Caco-2 (cell line): ENCODE measurements at regions of chr6 and their contacts with region 1.

Region 1: GRCh38 chr6:84346364-84346763 is 118.9 kb upstream of the CEP162 start:
- DNase-seq: no peak
- H3K4me3 ChIP-seq: no peak overlapping the region
- H3K4me3 Mint-ChIP-seq: no peak overlapping the region
- H3K27ac Mint-ChIP-seq: no peak overlapping the region
- H3K4me1 ChIP-seq: no peaks in the 10 kb centered on the region
- H3K4me1 Mint-ChIP-seq: peaks cover 6% of the 10 kb centered on the region
- H3K27me3 ChIP-seq: no peaks in the 10 kb centered on the region
- H3K27me3 Mint-ChIP-seq: peaks cover 7% of the 10 kb centered on the region
- CTCF ChIP-seq: peak in 1 of 2 experiments; percentile 13

Region 2: DNA sequence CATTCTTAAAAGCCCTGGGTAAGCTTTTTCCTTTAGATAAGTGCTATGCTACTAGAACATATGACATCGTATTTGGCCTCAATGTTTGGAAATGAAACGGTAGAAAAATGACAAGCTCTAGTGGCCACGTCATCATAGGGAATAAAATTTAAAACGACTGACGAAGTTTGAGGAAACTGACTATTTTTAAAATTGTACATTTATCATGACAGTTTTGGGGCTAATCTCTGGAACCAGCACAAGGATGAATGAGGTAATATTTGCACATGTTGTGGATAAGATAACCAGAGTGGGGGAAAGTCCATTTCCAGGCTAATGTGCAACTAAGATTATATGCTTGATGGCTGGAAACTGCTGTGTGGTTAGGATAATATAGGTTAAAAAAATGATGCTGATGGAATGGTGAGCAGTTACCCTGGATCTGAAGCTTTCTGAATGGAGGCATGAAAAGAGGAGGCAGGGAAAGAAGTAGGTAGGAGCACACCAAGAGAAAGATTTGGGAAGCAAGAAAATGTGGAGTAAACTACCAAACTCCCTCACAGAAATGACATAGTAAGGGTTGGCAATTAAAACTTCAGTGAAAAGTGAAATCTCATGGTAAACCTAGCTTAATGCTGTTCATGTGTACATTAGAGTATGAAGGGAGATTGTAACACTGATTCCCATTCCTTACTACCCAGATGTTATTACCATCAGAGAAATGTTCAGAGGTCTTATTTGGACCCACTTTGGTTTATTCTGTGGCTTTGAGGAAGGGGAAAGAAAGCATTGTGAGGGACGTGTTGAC is 76.2 kb before region 1 on chr6:
- CTCF ChIA-PET with region 1: no interaction called
- POLR2A ChIA-PET with region 1: no interaction called
- intact Hi-C with region 1: loop called (anchors 5 kb)
- DNase-seq: peak in 1 of 2 experiments; percentile 45
- H3K4me3 ChIP-seq: no peak overlapping the region
- H3K4me3 Mint-ChIP-seq: peak overlapping the region; percentile 50
- H3K27ac Mint-ChIP-seq: peak overlapping the region; percentile 70
- H3K4me1 ChIP-seq: peaks cover 13% of the 10 kb centered on the region
- H3K4me1 Mint-ChIP-seq: peaks cover 29% of the 10 kb centered on the region
- H3K27me3 ChIP-seq: no peaks in the 10 kb centered on the region
- H3K27me3 Mint-ChIP-seq: no peaks in the 10 kb centered on the region
- CTCF ChIP-seq: no peak